Activated T-helper 1 cell treated with anti-CD3 and anti-CD28 coated beads, Interleukin-12 subunit alpha, Interleukin-12 subunit beta, Interleukin-2, Interleukin-4 antibody, amounts not matched to agents 30 ng/mL and 10 ng/mL and 1 ng/mL, durations not matched to agents 14 hours and 24 hours and 36 hours (primary cell): ENCODE measurements at regions of chr12 and their contacts with region 1.

Region 1: GRCh38 chr12:116277393-116278278 is at the start of gene MED13L:
- DNase-seq: peak; percentile 86
- H3K4me3 Mint-ChIP-seq: peak within 1 kb of the TSS; percentile 99
- H3K27ac Mint-ChIP-seq: peak within 1 kb of the TSS; percentile 96
- H3K4me1 Mint-ChIP-seq: peaks cover 62% of the 10 kb centered on the region
- H3K27me3 Mint-ChIP-seq: peaks cover 12% of the 10 kb centered on the region
- total RNA-seq, gene MED13L: 65.5 and 66.1 TPM in 2 replicates

Region 2: DNA sequence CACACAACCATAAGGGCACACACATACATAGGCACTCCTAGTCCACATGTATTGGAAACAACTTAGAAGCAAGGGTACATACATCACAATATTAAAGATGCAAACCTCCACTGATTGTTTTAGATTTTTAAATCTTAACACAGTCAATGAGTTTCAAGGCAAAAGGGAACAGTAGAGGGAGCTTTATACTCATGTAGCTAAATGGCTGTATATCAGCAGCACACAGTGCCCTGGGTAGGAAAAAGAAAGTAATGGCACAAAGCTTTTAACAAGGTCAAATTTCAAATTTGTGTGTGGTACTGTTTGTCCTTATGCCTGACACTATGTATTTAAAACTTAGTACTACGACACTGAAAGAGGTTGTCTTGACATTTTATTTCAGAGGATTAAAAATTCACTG is 262.1 kb before region 1 on chr12:
- intact Hi-C with region 1: loop called (anchors 1 kb)
- DNase-seq: no peak
- H3K4me3 Mint-ChIP-seq: no peak overlapping the region
- H3K27ac Mint-ChIP-seq: no peak overlapping the region
- H3K4me1 Mint-ChIP-seq: peaks cover 7% of the 10 kb centered on the region
- H3K27me3 Mint-ChIP-seq: no peaks in the 10 kb centered on the region

Region 3: DNA sequence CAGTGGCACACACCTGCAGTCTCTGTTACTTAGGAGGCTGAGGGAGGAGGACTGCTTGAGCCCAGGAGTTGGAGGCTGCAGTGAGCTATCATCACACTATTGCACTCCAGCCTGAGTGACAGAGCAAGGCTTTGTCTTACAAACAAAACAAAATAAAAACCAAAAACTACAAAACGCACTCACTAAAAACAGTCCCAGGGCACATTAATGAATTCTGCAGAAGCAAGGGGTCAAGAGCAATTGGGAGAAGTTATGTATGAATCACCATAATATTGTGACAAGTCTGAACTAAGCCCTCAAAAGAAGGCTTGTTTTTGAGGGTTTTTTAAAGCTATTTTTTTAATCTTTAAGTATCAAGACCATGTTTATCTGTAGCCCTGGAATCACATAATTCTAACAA is 201.2 kb before region 1 on chr12:
- intact Hi-C with region 1: no loop called
- DNase-seq: no peak
- H3K4me3 Mint-ChIP-seq: no peak overlapping the region
- H3K27ac Mint-ChIP-seq: no peak overlapping the region
- H3K4me1 Mint-ChIP-seq: peaks cover 25% of the 10 kb centered on the region
- H3K27me3 Mint-ChIP-seq: no peaks in the 10 kb centered on the region

Region 4: GRCh38 chr12:116194935-116195431 is 82.7 kb before region 1 on chr12:
- intact Hi-C with region 1: loop called (anchors 2 kb)
- DNase-seq: peak; percentile 60
- H3K4me3 Mint-ChIP-seq: peak overlapping the region; percentile 50
- H3K27ac Mint-ChIP-seq: peak overlapping the region; percentile 77
- H3K4me1 Mint-ChIP-seq: peaks cover 48% of the 10 kb centered on the region
- H3K27me3 Mint-ChIP-seq: peaks cover 2% of the 10 kb centered on the region

Region 5: DNA sequence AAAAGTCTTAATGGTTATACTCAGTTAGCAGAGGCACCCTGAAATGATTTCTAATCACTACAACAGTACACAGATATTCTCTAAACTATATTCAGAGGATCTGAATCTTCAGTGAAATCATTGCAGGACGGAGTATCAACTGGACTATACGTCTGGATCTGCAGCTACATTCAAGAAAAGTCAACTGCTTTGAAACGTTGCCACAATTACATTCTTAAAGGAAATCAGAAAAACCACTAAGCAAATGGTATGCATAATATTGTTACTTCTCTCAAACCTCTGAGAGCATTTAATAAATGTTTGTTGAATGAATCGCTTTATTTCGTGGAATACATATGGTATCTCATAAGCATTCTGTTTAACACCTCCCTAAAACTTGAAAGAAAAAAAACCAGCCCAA is 67.5 kb before region 1 on chr12:
- intact Hi-C with region 1: no loop called
- DNase-seq: no peak
- H3K4me3 Mint-ChIP-seq: no peak overlapping the region
- H3K27ac Mint-ChIP-seq: no peak overlapping the region
- H3K4me1 Mint-ChIP-seq: peaks cover 27% of the 10 kb centered on the region
- H3K27me3 Mint-ChIP-seq: no peaks in the 10 kb centered on the region

Region 6: DNA sequence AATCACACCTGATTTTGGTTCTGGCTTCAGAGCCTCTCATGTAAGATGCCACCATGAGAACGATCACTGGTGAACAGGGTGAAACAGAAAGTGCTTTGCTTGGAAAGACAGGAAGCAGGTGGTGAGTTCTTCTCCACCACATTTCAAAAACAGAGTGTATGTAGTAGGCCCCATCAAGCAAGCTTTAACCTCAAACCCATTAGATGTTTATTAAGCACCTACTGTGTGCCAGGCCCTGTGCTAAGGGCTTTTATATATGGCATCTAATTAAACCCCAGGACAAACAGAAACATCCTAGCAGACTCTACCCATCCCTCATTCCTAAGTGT is 47.7 kb after region 1 on chr12:
- intact Hi-C with region 1: loop called (anchors 1 kb)
- DNase-seq: peak; percentile 31
- H3K4me3 Mint-ChIP-seq: no peak overlapping the region
- H3K27ac Mint-ChIP-seq: peak overlapping the region; percentile 75
- H3K4me1 Mint-ChIP-seq: peaks cover 30% of the 10 kb centered on the region
- H3K27me3 Mint-ChIP-seq: peaks cover 8% of the 10 kb centered on the region

Region 7: DNA sequence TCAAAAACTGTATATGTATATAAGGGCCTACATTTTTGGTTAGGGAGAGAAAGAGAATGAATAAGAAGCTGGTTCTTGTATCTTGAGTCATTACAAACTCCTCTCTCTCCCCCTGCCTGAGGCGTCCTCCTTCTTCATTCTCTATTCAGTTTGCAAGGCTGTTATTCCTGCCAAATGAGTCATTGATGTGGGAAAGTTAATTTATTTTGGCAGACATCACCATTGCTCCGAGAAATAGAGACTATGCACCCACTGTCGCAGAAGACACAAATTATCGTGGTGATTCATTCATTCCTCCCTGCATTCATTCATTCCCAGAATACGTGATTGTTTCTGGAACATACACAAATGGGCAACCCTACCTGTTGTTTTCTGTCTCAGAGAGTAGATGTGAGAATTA is 112.4 kb after region 1 on chr12:
- intact Hi-C with region 1: no loop called
- DNase-seq: no peak
- H3K4me3 Mint-ChIP-seq: no peak overlapping the region
- H3K27ac Mint-ChIP-seq: no peak overlapping the region
- H3K4me1 Mint-ChIP-seq: no peaks in the 10 kb centered on the region
- H3K27me3 Mint-ChIP-seq: peaks cover 12% of the 10 kb centered on the region

Region 8: GRCh38 chr12:116474331-116474730 is 196.7 kb after region 1 on chr12:
- intact Hi-C with region 1: no loop called
- DNase-seq: no peak
- H3K4me3 Mint-ChIP-seq: no peak overlapping the region
- H3K27ac Mint-ChIP-seq: no peak overlapping the region
- H3K4me1 Mint-ChIP-seq: no peaks in the 10 kb centered on the region
- H3K27me3 Mint-ChIP-seq: peaks cover 7% of the 10 kb centered on the region

Region 9: GRCh38 chr12:116559162-116559935 is 281.7 kb after region 1 on chr12 and contains the start of gene MAP1LC3B2:
- intact Hi-C with region 1: loop called (anchors 1 kb)
- DNase-seq: peak; percentile 85
- H3K4me3 Mint-ChIP-seq: peak within 1 kb of the TSS; percentile 65
- H3K27ac Mint-ChIP-seq: peak within 1 kb of the TSS; percentile 94
- H3K4me1 Mint-ChIP-seq: peaks cover 38% of the 10 kb centered on the region
- H3K27me3 Mint-ChIP-seq: peaks cover 6% of the 10 kb centered on the region
- total RNA-seq, gene MAP1LC3B2: 0.49 and 0.57 TPM in 2 replicates

Region 10: GRCh38 chr12:116737774-116738700 is 460.4 kb after region 1 on chr12 and contains the starts of genes RNFT2 and SPRING1:
- intact Hi-C with region 1: loop called (anchors 5 kb)
- DNase-seq: peak; percentile 99
- H3K4me3 Mint-ChIP-seq: peak within 1 kb of the TSS; percentile 85
- H3K27ac Mint-ChIP-seq: peak within 1 kb of the TSS; percentile 85
- H3K4me1 Mint-ChIP-seq: peaks cover 13% of the 10 kb centered on the region
- H3K27me3 Mint-ChIP-seq: no peaks in the 10 kb centered on the region
- total RNA-seq, gene RNFT2: 8.0 and 11.8 TPM in 2 replicates
- total RNA-seq, gene SPRING1: 31.0 and 39.0 TPM in 2 replicates